ENCODE measurements at regions of chr6 and their contacts with region 1.

Region 1: DNA sequence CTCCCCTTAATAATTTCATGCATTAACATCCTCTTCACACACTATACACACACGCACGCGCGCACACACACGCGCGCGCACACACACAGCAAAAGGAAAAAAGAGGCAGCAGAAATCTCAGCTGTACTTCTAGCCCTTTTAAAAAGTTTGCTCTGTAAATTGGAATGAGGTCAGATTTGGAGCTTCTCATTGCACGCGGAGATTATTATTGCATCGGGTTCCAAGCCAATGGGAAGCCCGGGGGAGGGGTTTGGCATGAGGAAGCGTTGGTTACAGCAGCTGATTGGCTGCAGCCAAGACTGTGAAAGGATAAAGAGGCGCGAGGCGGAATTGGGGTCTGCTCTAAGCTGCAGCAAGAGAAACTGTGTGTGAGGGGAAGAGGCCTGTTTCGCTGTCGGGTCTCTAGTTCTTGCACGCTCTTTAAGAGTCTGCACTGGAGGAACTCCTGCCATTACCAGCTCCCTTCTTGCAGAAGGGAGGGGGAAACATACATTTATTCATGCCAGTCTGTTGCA is at the start of gene SOX4:
- DNase-seq: peak; percentile 75 to 96
- H3K4me3 ChIP-seq: peak within 1 kb of the TSS; percentile 78
- H3K27ac ChIP-seq: peak within 1 kb of the TSS; percentile 91 to 97
- H3K4me1 ChIP-seq: peaks cover 0 to 4% of the 10 kb centered on the region in 2 donors
- H3K27me3 ChIP-seq: no peaks in the 10 kb centered on the region
- CTCF ChIP-seq: no peak
- total RNA-seq, gene SOX4: 10.4 TPM

Region 2: GRCh38 chr6:20564269-20564668 is 1029.2 kb before region 1 on chr6:
- intact Hi-C with region 1: loop called (anchors 2 kb)
- DNase-seq: no peak
- H3K4me3 ChIP-seq: no peak overlapping the region
- H3K27ac ChIP-seq: no peak overlapping the region
- H3K4me1 ChIP-seq: no peaks in the 10 kb centered on the region
- H3K27me3 ChIP-seq: no peaks in the 10 kb centered on the region
- CTCF ChIP-seq: peak; percentile 41 to 67 (median 52)

Region 3: GRCh38 chr6:21033575-21034026 is 559.9 kb before region 1 on chr6:
- intact Hi-C with region 1: loop called (anchors 10 kb)
- DNase-seq: peak in 1 of 2 donors; percentile 68
- H3K4me3 ChIP-seq: peak overlapping the region in 1 of 2 donors; percentile 5
- H3K27ac ChIP-seq: peak overlapping the region; percentile 4 to 20
- H3K4me1 ChIP-seq: no peaks in the 10 kb centered on the region
- H3K27me3 ChIP-seq: no peaks in the 10 kb centered on the region
- CTCF ChIP-seq: no peak

Region 4: GRCh38 chr6:21731411-21732031 is 138.1 kb after region 1 on chr6:
- intact Hi-C with region 1: loop called (anchors 5 kb)
- DNase-seq: no peak
- H3K4me3 ChIP-seq: no peak overlapping the region
- H3K27ac ChIP-seq: no peak overlapping the region
- H3K4me1 ChIP-seq: peaks cover 0 to 13% of the 10 kb centered on the region in 2 donors
- H3K27me3 ChIP-seq: no peaks in the 10 kb centered on the region
- CTCF ChIP-seq: no peak

Region 5: GRCh38 chr6:22071270-22072041 is 478.0 kb after region 1 on chr6:
- intact Hi-C with region 1: loop called (anchors 5 kb)
- DNase-seq: peak; percentile 23 to 73
- H3K4me3 ChIP-seq: peak overlapping the region in 1 of 2 donors; percentile 53
- H3K27ac ChIP-seq: peak overlapping the region; percentile 79 to 80
- H3K4me1 ChIP-seq: peaks cover 5 to 10% of the 10 kb centered on the region in 2 donors
- H3K27me3 ChIP-seq: no peaks in the 10 kb centered on the region
- CTCF ChIP-seq: no peak

Measured in ascending aorta (tissue), 2 donors.